Caco-2 (cell line): ENCODE measurements at regions of chr5 and their contacts with region 1.

Region 1: DNA sequence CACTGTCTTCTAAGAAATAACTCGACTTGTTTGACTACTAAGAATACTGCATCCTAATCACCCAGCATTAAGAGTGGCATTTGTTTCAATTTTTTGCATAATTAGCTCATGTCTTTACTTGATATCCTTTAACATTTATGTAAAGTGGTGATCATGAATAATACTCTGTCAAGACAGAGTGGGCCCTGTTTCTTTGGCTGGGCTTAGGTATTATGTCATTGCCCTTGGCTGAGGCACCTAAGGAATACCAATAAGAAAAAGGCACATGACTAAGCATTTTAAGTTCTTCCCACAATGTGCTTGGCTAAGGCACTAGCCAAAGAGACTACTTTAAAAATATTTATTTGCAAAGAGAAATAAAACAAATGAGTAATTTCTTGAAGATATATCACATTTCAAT is 308.1 kb downstream of the CTNND2 start:
- DNase-seq: peak in 1 of 2 experiments; percentile 6
- H3K4me3 ChIP-seq: no peak overlapping the region
- H3K4me3 Mint-ChIP-seq: no peak overlapping the region
- H3K27ac Mint-ChIP-seq: peak overlapping the region; percentile 60
- H3K4me1 ChIP-seq: peaks cover 42% of the 10 kb centered on the region
- H3K4me1 Mint-ChIP-seq: peaks cover 22% of the 10 kb centered on the region
- H3K27me3 ChIP-seq: no peaks in the 10 kb centered on the region
- H3K27me3 Mint-ChIP-seq: no peaks in the 10 kb centered on the region
- CTCF ChIP-seq: no peak

Region 2: GRCh38 chr5:11251262-11251661 is 344.9 kb before region 1 on chr5:
- CTCF ChIA-PET with region 1: no interaction called
- POLR2A ChIA-PET with region 1: no interaction called
- intact Hi-C with region 1: loop called (anchors 5 kb)
- DNase-seq: peak; percentile 62 to 73
- H3K4me3 ChIP-seq: no peak overlapping the region
- H3K4me3 Mint-ChIP-seq: peak overlapping the region; percentile 64
- H3K27ac Mint-ChIP-seq: peak overlapping the region; percentile 83
- H3K4me1 ChIP-seq: peaks cover 19% of the 10 kb centered on the region
- H3K4me1 Mint-ChIP-seq: peaks cover 28% of the 10 kb centered on the region
- H3K27me3 ChIP-seq: no peaks in the 10 kb centered on the region
- H3K27me3 Mint-ChIP-seq: no peaks in the 10 kb centered on the region
- CTCF ChIP-seq: no peak

Region 3: GRCh38 chr5:11518656-11519055 is 77.5 kb before region 1 on chr5:
- CTCF ChIA-PET with region 1: no interaction called
- POLR2A ChIA-PET with region 1: no interaction called
- intact Hi-C with region 1: loop called (anchors 1 kb)
- DNase-seq: peak in 1 of 2 experiments; percentile 41
- H3K4me3 ChIP-seq: no peak overlapping the region
- H3K4me3 Mint-ChIP-seq: no peak overlapping the region
- H3K27ac Mint-ChIP-seq: peak overlapping the region; percentile 16
- H3K4me1 ChIP-seq: peaks cover 38% of the 10 kb centered on the region
- H3K4me1 Mint-ChIP-seq: peaks cover 16% of the 10 kb centered on the region
- H3K27me3 ChIP-seq: no peaks in the 10 kb centered on the region
- H3K27me3 Mint-ChIP-seq: no peaks in the 10 kb centered on the region
- CTCF ChIP-seq: no peak

Region 4: DNA sequence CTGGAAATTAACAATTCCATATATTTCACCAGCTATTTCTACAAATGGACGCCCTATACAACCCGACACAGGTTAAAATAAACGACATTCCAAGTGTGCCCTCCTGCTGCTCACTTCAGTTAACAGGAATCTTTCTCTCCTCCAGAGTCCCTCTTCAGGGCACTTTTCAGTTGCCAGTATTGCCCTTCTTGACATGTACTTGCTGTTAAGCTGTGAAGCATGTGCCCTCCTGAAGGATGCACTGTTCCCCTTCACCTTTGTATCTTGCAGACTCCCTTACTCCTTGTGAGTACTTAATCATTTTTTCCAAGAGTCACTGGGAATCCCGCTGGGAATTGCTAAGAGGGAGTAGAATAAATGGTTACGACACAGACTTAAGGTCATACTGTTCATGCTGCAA is 56.1 kb before region 1 on chr5:
- CTCF ChIA-PET with region 1: no interaction called
- POLR2A ChIA-PET with region 1: no interaction called
- intact Hi-C with region 1: no loop called
- DNase-seq: no peak
- H3K4me3 ChIP-seq: no peak overlapping the region
- H3K4me3 Mint-ChIP-seq: no peak overlapping the region
- H3K27ac Mint-ChIP-seq: no peak overlapping the region
- H3K4me1 ChIP-seq: no peaks in the 10 kb centered on the region
- H3K4me1 Mint-ChIP-seq: no peaks in the 10 kb centered on the region
- H3K27me3 ChIP-seq: no peaks in the 10 kb centered on the region
- H3K27me3 Mint-ChIP-seq: no peaks in the 10 kb centered on the region
- CTCF ChIP-seq: no peak

Region 5: DNA sequence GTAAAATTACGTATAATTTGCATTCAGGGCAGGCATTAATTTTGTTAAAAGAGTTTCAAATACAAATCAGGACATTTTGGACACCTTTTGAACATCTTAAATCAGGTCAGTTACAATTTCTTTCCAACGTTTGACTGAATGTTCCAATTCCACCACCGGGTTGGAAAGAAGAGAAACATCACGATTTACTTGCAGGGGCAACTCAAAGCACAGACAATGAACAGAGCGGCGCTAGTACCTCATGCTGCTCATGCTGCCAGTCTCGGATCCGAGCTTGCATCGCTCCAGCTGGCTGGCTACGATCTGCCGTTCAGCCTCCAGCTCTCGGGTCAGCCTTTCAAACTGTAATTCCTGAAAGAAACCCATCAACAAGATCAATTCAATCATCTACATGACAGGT is 31.5 kb before region 1 on chr5:
- CTCF ChIA-PET with region 1: no interaction called
- POLR2A ChIA-PET with region 1: no interaction called
- intact Hi-C with region 1: loop called (anchors 5 kb)
- DNase-seq: no peak
- H3K4me3 ChIP-seq: no peak overlapping the region
- H3K4me3 Mint-ChIP-seq: no peak overlapping the region
- H3K27ac Mint-ChIP-seq: no peak overlapping the region
- H3K4me1 ChIP-seq: no peaks in the 10 kb centered on the region
- H3K4me1 Mint-ChIP-seq: peaks cover 7% of the 10 kb centered on the region
- H3K27me3 ChIP-seq: no peaks in the 10 kb centered on the region
- H3K27me3 Mint-ChIP-seq: no peaks in the 10 kb centered on the region
- CTCF ChIP-seq: no peak

Region 6: DNA sequence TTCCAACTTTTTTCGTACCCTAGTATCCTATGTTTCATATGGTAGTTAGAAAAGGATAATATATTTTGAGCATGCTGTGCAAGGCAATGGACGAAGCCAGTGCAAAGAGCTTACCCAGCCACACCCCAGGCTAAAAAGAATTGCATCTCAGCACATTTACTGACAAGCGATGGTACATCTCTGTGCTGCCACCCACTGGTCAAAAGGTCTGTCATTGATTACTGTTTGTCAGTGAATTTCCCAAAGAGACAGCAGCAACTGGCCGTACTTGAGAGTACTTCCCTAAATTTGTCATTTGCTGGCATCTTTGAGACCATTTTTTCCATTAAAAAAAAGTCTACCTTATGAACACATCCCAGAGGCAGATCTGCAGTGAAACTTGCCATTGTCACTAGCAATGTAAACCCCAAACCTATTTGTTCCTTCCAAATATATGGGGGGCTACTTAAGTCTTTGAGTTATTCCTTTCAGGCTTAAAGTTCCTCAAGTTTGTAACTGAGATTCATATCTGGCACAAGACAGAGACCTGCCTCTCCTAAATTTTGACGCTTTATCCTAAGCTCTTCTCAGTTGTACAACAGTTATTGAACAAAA is 123.8 kb after region 1 on chr5:
- CTCF ChIA-PET with region 1: no interaction called
- POLR2A ChIA-PET with region 1: no interaction called
- intact Hi-C with region 1: loop called (anchors 5 kb)
- DNase-seq: peak; percentile 72 to 78
- H3K4me3 ChIP-seq: no peak overlapping the region
- H3K4me3 Mint-ChIP-seq: no peak overlapping the region
- H3K27ac Mint-ChIP-seq: no peak overlapping the region
- H3K4me1 ChIP-seq: no peaks in the 10 kb centered on the region
- H3K4me1 Mint-ChIP-seq: no peaks in the 10 kb centered on the region
- H3K27me3 ChIP-seq: no peaks in the 10 kb centered on the region
- H3K27me3 Mint-ChIP-seq: no peaks in the 10 kb centered on the region
- CTCF ChIP-seq: peak; percentile 64 to 69